Dorsolateral prefrontal cortex (tissue), 120 donors: ENCODE measurements at regions of chr21 and their contacts with region 1.

Region 1: GRCh38 chr21:37563641-37564340 is 197.2 kb downstream of the DYRK1A start:
- DNase-seq: peak; percentile 88 to 96 (median 94)
- H3K4me3 ChIP-seq: peak overlapping the region; percentile 59 to 97 (median 82)
- H3K27ac ChIP-seq: peak overlapping the region; percentile 42 to 98 (median 94)
- H3K27me3 ChIP-seq: no peaks in the 10 kb centered on the region
- CTCF ChIP-seq: peak; percentile 18 to 80 (median 66)

Region 2: DNA sequence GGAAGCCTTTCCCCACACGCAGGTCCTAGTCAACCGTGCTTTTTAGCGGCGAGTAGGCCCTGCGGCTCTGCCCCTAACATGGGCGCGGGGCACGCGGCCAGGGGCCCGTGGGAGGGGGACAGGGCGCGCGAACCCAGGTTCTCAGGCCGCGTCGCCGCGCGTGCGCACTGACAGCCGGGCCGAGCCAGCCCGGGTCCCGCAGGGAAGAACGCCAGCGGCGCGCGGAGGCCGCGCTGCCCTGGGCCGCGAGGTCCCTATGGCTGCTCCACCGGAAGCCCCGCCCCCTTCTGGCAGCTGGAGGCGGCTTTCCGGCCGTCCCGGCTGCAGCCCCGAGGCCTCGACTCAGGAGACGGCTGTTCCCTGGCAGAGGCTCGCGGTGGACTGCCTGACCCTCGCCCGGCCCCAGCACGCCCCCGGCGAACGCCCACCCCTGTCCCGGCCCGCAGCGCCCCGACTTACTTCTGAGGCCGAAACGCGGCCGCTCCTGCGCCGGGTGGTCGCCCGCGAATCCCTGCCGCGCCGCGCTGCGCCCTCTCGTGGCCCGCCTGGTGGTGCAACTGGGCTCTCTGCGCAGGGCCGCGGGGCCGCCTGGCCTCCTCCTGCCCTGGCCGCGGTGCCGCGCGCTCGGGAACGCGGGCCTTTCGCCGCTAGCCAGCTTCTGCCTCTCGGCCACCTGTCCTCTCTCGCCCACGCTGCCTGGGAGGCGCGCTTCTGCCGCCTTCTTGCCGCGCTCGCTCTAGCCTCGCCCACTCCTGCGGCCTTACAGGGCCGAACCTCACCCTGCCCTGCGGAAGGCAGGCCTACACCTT is 573.9 kb before region 1 on chr21:
- intact Hi-C with region 1: loop called in 1 of 2 experiments (anchors 10 kb)
- DNase-seq: peak; percentile 73 to 94 (median 85)
- H3K4me3 ChIP-seq: peak overlapping the region; percentile 53 to 88 (median 71)
- H3K27ac ChIP-seq: peak overlapping the region; percentile 70 to 99 (median 95)
- H3K27me3 ChIP-seq: peaks cover 0 to 8% (median 0%) of the 10 kb centered on the region in 45 donors
- CTCF ChIP-seq: peak in 55 of 56 donors; percentile 40 to 98 (median 88)

Region 3: GRCh38 chr21:37220981-37221664 is 342.7 kb before region 1 on chr21:
- intact Hi-C with region 1: loop called (anchors 1 to 2 kb)
- DNase-seq: peak; percentile 91 to 97 (median 96)
- H3K4me3 ChIP-seq: peak overlapping the region; percentile 39 to 96 (median 79)
- H3K27ac ChIP-seq: peak overlapping the region; percentile 2 to 93 (median 82)
- H3K27me3 ChIP-seq: no peaks in the 10 kb centered on the region
- CTCF ChIP-seq: peak; percentile 52 to 92 (median 74)

Region 4: DNA sequence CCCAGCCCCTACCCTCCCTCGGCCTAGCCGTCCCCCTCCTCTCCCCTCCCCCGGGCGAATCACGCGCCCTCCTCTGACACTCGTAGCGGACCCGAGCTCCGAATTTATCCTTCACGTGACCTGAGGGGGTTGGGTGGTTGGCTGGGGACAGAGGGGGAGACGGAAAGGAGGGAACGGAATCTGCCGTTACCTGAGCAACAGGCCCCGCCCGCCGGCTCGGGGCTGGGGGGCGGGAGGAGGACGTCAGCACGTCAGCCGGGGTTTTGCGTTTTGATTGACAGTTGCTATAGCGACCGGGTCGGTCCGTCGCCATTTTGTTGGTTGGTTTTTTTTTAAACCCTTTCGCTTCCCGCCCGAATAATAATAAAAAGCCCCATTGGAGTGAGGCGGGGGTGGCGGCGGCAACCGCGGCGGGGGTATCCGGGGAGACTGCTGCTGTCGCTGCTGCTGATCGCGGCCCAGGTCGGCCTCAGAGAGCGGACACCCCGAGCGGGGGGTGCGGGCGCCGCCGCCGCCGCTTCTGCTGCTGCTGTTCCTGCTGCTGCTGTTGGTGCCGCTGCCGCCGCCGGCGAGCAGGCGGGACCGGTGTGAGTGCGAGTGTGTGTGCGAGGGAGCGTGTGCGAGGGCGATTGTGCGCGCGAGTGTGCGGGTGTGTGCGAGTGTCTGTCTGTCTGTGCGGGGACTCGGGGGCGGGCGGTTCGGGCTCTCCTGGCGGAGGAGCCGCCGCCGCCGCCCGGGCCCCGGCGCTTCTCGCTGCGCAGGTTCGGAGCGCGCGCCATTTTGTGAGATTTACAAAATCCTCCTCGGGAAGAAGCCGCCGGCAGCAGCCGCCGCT is 197.1 kb before region 1 on chr21 and contains the start of gene DYRK1A:
- intact Hi-C with region 1: loop called (anchors 1 to 2 kb)
- DNase-seq: peak; percentile 95 to 99 (median 98)
- H3K4me3 ChIP-seq: peak within 1 kb of the TSS; percentile 77 to 99 (median 92)
- H3K27ac ChIP-seq: peak within 1 kb of the TSS; percentile 96 to 100 (median 100)
- H3K27me3 ChIP-seq: no peaks in the 10 kb centered on the region
- CTCF ChIP-seq: peak in 5 of 56 donors; percentile 11 to 26 (median 17)
- total RNA-seq, gene DYRK1A: 72.3 to 147 (median 97.5) TPM

Region 5: GRCh38 chr21:37380349-37381323 is 183.2 kb before region 1 on chr21:
- intact Hi-C with region 1: no loop called
- DNase-seq: peak in 1 of 10 donors; percentile 78
- H3K4me3 ChIP-seq: no peak overlapping the region
- H3K27ac ChIP-seq: peak overlapping the region in 3 of 59 donors; percentile 2 to 38 (median 18)
- H3K27me3 ChIP-seq: no peaks in the 10 kb centered on the region
- CTCF ChIP-seq: no peak

Region 6: GRCh38 chr21:37503848-37504467 is 59.8 kb before region 1 on chr21:
- intact Hi-C with region 1: loop called in 1 of 2 experiments (anchors 10 kb)
- DNase-seq: no peak
- H3K4me3 ChIP-seq: no peak overlapping the region
- H3K27ac ChIP-seq: no peak overlapping the region
- H3K27me3 ChIP-seq: no peaks in the 10 kb centered on the region
- CTCF ChIP-seq: no peak